Keratinocyte (primary cell): ENCODE measurements at regions of chr6 and their contacts with region 1.

Region 1: GRCh38 chr6:132768051-132768517 is 10.4 kb upstream of the VNN2 start:
- DNase-seq: no peak
- H3K4me3 ChIP-seq: no peak overlapping the region
- H3K27ac ChIP-seq: no peak overlapping the region
- H3K4me1 ChIP-seq: peaks cover 8% of the 10 kb centered on the region
- H3K27me3 ChIP-seq: no peaks in the 10 kb centered on the region
- CTCF ChIP-seq: peak; percentile 50 to 69 (median 52)

Region 2: GRCh38 chr6:132527791-132528190 is 240.3 kb before region 1 on chr6:
- dilution Hi-C with region 1: loop called (anchors 10 kb)
- DNase-seq: no peak
- H3K4me3 ChIP-seq: no peak overlapping the region
- H3K27ac ChIP-seq: no peak overlapping the region
- H3K4me1 ChIP-seq: no peaks in the 10 kb centered on the region
- H3K27me3 ChIP-seq: no peaks in the 10 kb centered on the region
- CTCF ChIP-seq: no peak